Heart right ventricle (tissue), 16 donors: ENCODE measurements at regions of chr11 and their contacts with region 1.

Region 1: DNA sequence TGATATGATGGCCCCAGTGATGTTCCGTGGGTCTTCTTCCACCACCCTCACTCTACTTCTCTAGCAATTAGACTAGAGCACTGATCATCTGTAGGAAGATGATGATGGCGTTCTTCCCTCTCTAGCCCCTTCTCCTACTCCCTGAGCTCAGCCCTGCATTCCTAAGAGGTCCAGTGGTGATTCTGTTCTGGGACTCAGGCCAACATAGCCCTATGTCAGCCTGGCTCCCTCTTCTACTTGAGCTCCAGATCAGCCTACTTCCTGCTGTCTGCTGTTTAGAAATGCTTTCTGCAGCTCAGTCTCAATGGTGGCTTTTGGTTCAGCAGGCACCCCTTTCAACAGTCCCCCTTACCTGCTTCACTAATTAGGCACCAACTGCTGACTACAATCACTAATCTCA is 86.1 kb upstream of the ZBED5 start:
- DNase-seq: no peak
- ATAC-seq: peak in 4 of 8 donors; percentile 22 to 52 (median 42)
- H3K4me3 ChIP-seq: no peak overlapping the region
- H3K27ac ChIP-seq: no peak overlapping the region
- H3K4me1 ChIP-seq: peaks cover 0 to 9% (median 0%) of the 10 kb centered on the region in 9 donors
- H3K27me3 ChIP-seq: no peaks in the 10 kb centered on the region
- CTCF ChIP-seq: no peak

Region 2: DNA sequence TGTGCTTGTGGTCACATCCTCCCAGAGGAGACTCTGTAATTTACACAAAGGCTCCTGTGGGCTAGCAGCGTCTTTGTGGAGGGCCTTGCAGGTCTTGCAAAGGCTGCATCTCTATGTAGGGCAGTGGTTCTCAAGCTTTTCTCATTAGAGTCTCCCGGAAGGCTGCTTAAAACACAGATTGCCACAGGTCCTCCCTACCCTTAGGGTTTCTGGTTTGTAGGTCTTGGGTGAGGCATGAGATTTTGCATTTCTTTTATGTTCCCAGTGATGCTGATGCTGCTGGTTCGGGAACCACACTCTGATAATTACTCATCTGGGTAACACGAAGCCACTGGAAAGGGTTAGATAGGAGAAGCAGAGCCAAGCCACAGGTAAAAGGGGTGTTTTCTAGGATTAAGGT is 65.2 kb after region 1 on chr11:
- intact Hi-C with region 1: loop called in 1 of 10 experiments (anchors 5 kb)
- DNase-seq: no peak
- ATAC-seq: no peak
- H3K4me3 ChIP-seq: no peak overlapping the region
- H3K27ac ChIP-seq: no peak overlapping the region
- H3K4me1 ChIP-seq: peaks cover 0 to 11% (median 3%) of the 10 kb centered on the region in 9 donors
- H3K27me3 ChIP-seq: peaks cover 0 to 29% (median 11%) of the 10 kb centered on the region in 7 donors
- CTCF ChIP-seq: no peak